Left ventricle myocardium superior (tissue), 1 donor: ENCODE measurements at regions of chr10 and their contacts with region 1.

Region 1: DNA sequence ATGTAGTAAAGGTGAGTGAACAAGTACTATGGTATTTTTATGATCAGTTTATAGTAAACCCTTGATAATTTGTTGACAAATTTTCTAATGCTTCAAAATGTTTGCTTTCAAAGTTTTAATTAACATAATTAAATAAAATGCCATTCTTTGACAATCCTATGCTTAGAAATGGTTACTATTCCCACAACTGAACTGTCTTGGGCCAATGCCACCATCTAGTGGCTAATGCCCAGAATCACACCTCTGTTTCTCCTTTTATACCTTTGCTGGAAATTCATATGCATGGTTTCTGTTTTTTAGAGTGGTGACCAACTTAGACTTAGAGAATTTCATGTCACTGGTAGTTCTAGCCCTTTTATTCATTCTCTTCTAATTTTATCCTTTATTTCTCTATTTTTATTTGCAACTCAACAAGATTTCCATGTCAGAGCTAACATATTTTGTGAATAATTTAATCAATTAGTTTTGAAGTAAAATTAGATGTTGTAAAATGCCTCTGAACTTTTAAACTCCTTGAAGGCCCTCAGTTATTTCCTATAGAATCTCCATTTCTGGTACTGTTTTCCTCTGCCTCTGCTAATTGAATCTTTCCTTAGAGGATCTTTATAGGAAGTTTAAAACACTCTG is 31.1 kb downstream of the PCGF5 start:
- DNase-seq: no peak
- ATAC-seq: peak; percentile 57

Region 2: DNA sequence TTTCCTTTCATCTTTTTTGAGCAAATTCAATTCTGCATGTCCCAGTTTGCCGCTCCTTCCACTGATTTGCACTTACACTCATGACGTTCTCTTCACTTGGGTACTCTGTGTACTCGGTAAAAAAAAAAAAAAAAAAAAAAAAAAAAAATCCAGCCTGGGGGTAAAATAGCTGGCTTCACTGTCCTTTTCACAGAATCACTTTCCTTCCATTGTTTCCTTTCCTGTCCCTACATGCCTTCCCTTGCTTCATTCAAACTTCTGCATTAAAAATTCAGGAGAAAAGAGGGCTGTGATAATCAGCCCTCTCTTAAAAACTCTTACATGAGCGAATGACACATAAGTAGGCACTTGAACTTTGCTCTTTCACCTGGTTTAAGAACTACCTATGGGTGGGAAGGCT is 339.4 kb before region 1 on chr10:
- intact Hi-C with region 1: loop called (anchors 1 kb)
- DNase-seq: no peak
- ATAC-seq: peak; percentile 17

Region 3: DNA sequence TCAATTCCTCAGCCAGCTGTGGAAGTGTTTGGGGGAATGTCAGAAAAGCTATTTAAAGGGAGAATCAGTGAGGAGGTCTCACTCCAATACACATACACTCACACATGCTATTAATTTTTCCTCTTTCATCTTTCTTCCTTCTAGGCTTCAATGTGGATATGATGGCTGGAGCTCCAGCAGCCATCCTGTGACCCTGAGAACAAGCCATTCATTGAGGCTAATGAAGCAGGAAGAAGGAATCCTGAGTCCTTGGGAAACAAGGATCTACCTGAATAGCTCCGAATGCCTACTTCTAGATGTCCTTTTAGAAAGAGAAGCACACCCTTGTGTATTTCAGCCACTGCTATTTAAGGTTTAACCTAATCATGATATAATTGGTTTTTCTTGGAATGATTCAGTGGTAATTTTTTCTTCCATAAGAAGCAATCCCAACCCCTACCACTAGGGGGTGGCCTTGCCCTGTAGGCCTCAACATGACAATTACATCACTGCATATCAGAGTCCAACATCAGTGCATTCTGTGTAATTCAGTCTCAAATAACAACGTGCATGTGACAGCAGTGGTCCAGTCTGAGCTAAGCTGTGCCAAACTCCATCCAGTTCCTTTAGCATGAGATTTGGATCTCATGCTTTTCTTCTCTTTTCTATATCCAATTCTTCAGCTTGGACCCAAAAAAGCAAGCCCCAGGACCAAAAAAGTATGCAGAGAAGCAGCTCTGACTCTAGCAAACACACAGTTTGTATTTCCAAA is 245.4 kb before region 1 on chr10:
- intact Hi-C with region 1: loop called (anchors 5 kb)
- DNase-seq: peak; percentile 35
- ATAC-seq: peak; percentile 83